Transverse colon (tissue), 4 donors: ENCODE measurements at regions of chr17 and their contacts with region 1.

Region 1: GRCh38 chr17:27578718-27579085 is 52.3 kb upstream of the LGALS9 start:
- DNase-seq: no peak
- H3K4me3 ChIP-seq: no peak overlapping the region
- H3K27ac ChIP-seq: no peak overlapping the region
- H3K4me1 ChIP-seq: peaks cover 0 to 15% (median 12%) of the 10 kb centered on the region in 4 donors
- H3K27me3 ChIP-seq: no peaks in the 10 kb centered on the region
- CTCF ChIP-seq: no peak
- EP300 ChIP-seq: no peak
- POLR2A ChIP-seq: no peak

Region 2: GRCh38 chr17:27407916-27408846 is 170.5 kb before region 1 on chr17:
- in situ Hi-C with region 1: no loop called
- intact Hi-C with region 1: no loop called
- DNase-seq: no peak
- H3K4me3 ChIP-seq: no peak overlapping the region
- H3K27ac ChIP-seq: no peak overlapping the region
- H3K4me1 ChIP-seq: peaks cover 0 to 8% (median 4%) of the 10 kb centered on the region in 4 donors
- H3K27me3 ChIP-seq: no peaks in the 10 kb centered on the region
- CTCF ChIP-seq: no peak
- EP300 ChIP-seq: no peak
- POLR2A ChIP-seq: no peak

Region 3: DNA sequence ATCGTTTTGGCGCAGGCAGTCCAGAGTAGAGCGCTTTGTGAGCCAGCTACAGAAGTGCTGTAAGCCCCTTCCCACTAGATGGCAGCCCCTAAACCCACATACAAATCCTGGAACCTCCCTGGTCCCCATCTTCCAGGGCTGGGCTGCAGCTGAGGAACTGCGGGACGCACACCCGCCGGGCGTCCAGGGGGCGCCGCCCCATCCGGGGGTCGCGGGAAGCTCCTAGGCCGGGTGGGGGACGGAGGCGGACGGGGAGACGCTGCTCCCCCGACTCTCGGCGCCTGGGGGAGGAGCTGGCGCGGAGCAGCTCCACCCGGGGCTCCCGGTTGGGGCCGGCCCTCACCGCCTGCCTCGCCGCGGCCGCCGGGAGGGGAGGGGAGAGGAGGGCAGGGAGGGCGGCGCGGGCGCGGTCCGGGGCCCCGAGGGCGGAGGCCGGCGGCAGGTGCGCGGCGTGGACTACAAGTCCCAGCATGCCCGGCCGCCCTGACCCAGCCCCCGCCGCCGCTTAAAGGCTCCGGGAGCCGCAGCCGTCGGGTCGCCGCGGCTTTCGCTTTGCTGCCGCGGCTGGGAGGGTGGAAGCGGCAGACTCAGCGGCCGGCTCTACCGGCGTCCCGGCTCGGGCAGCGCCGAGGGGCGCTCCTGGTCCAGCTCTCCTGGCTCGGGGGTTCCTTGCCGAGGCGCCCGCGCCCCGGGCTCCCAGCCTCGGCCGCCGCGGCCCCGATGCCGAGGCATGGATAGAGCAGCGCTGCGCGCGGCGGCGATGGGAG is 122.6 kb before region 1 on chr17 and contains the start of gene KSR1:
- in situ Hi-C with region 1: loop called in 1 of 4 experiments (anchors 25 kb)
- intact Hi-C with region 1: no loop called
- DNase-seq: peak; percentile 89
- H3K4me3 ChIP-seq: peak within 1 kb of the TSS; percentile 78 to 88 (median 84)
- H3K27ac ChIP-seq: peak within 1 kb of the TSS; percentile 77 to 89 (median 84)
- H3K4me1 ChIP-seq: peaks cover 6 to 28% (median 19%) of the 10 kb centered on the region in 4 donors
- H3K27me3 ChIP-seq: peaks cover 11% of the 10 kb centered on the region
- CTCF ChIP-seq: peak in 2 of 5 experiments; percentile 18
- EP300 ChIP-seq: no peak
- POLR2A ChIP-seq: peak; percentile 41
- total RNA-seq, gene KSR1: 8.2 to 55.7 (median 30.9) TPM

Region 4: GRCh38 chr17:27494192-27495091 is 84.3 kb before region 1 on chr17:
- in situ Hi-C with region 1: loop called in 1 of 4 experiments (anchors 25 kb)
- intact Hi-C with region 1: no loop called
- DNase-seq: peak; percentile 92
- H3K4me3 ChIP-seq: peak overlapping the region in 3 of 4 donors; percentile 13 to 41 (median 24)
- H3K27ac ChIP-seq: peak overlapping the region; percentile 69 to 83 (median 80)
- H3K4me1 ChIP-seq: peaks cover 17 to 36% (median 26%) of the 10 kb centered on the region in 4 donors
- H3K27me3 ChIP-seq: no peaks in the 10 kb centered on the region
- CTCF ChIP-seq: peak; percentile 35 to 75 (median 53)
- EP300 ChIP-seq: no peak
- POLR2A ChIP-seq: peak; percentile 68